ENCODE measurements at regions of chr2 and their contacts with region 1.

Region 1: GRCh38 chr2:25991965-25992364 is 9.7 kb upstream of the KIF3C start:
- DNase-seq: no peak
- ATAC-seq: peak; percentile 50
- H3K4me3 ChIP-seq: no peak overlapping the region
- H3K27ac ChIP-seq: no peak overlapping the region
- H3K4me1 ChIP-seq: no peaks in the 10 kb centered on the region
- H3K27me3 ChIP-seq: no peaks in the 10 kb centered on the region
- CTCF ChIP-seq: no peak
- EP300 ChIP-seq: no peak
- POLR2A ChIP-seq: no peak
- RAD21 ChIP-seq: no peak

Region 2: GRCh38 chr2:24797644-24798043 is 1194.3 kb before region 1 on chr2:
- CTCF ChIA-PET with region 1: no interaction called
- POLR2A ChIA-PET with region 1: no interaction called
- RAD21 ChIA-PET with region 1: no interaction called
- SMC1A ChIA-PET with region 1: no interaction called
- in situ Hi-C with region 1: no loop called
- intact Hi-C with region 1: no loop called
- DNase-seq: no peak
- ATAC-seq: no peak
- H3K4me3 ChIP-seq: no peak overlapping the region
- H3K27ac ChIP-seq: no peak overlapping the region
- H3K4me1 ChIP-seq: no peaks in the 10 kb centered on the region
- H3K27me3 ChIP-seq: no peaks in the 10 kb centered on the region
- CTCF ChIP-seq: no peak
- EP300 ChIP-seq: no peak
- POLR2A ChIP-seq: no peak
- RAD21 ChIP-seq: no peak

Region 3: DNA sequence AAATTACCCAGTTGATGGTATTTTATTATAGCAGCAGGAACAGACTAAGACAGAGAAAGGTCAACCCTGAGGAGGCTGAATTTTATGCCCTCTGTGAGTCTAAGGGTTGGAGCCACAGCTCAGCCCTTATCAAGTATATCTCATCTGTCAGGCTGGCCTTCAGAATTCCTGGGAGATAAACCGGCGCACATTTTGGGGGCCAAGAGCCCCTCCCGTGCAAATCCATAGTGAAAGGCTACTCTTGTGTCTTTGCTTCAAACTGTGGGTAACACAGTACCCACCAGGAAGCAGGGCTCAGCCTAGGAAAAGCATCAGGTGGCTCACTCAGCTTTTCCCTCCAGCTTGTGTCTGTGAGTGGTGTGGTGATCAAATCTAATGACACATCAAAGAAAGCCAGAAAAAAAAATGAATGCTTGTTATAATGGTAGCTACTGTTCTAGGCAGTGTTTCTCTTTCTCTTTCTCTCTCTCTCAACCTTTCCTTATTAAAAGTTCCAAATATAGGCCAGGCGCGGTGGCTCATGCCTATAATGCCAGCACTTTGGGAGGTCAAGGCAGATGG is 88.7 kb before region 1 on chr2:
- CTCF ChIA-PET with region 1: no interaction called
- POLR2A ChIA-PET with region 1: no interaction called
- RAD21 ChIA-PET with region 1: no interaction called
- SMC1A ChIA-PET with region 1: no interaction called
- in situ Hi-C with region 1: no loop called
- intact Hi-C with region 1: no loop called
- DNase-seq: no peak
- ATAC-seq: no peak
- H3K4me3 ChIP-seq: no peak overlapping the region
- H3K27ac ChIP-seq: no peak overlapping the region
- H3K4me1 ChIP-seq: no peaks in the 10 kb centered on the region
- H3K27me3 ChIP-seq: no peaks in the 10 kb centered on the region; a peak in 2 of 4 replicates
- CTCF ChIP-seq: no peak
- EP300 ChIP-seq: no peak
- POLR2A ChIP-seq: no peak
- RAD21 ChIP-seq: no peak

Region 4: DNA sequence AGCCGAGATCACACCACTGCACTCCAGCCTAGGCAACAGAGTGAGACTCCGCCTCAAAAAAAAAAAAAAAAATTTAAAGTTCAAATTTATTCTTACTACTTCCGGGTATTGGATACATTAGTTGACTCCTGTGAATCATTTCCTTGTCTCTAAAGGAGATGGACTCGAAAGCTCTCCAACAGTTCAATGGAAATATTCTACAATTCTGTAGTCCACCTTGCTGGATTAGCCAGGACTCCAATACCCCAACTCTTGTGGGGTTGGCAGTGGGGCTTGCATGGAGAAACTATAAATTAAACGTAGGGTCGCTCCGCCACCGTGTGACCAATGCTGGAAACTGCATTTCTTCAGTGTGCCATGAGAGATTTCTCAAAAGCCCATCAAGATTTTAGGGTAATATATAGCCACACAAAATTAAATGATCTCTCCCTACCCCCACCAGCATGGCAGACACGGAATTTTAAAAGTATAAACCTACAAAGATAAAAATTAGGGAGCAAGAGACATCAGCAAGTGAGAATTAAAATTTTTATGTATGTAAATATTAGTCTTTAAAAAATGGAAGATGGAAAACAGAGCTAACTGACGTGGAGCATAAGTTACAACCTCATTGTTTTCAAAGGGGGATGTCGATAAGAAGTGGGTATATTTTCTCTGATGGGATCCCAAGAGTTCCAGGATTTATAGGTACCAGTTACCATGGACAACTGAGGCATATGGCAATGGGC is 153.2 kb after region 1 on chr2:
- CTCF ChIA-PET with region 1: interaction called, 84 read pairs
- POLR2A ChIA-PET with region 1: no interaction called
- RAD21 ChIA-PET with region 1: interaction called, 17 read pairs
- SMC1A ChIA-PET with region 1: interaction called, 57 read pairs
- in situ Hi-C with region 1: loop called (anchors 5 kb)
- intact Hi-C with region 1: loop called (anchors 1 kb)
- DNase-seq: peak; percentile 23
- ATAC-seq: peak; percentile 87
- H3K4me3 ChIP-seq: no peak overlapping the region
- H3K27ac ChIP-seq: no peak overlapping the region
- H3K4me1 ChIP-seq: no peaks in the 10 kb centered on the region
- H3K27me3 ChIP-seq: no peaks in the 10 kb centered on the region
- CTCF ChIP-seq: peak; percentile 66 to 86 (median 79)
- EP300 ChIP-seq: no peak
- POLR2A ChIP-seq: no peak
- RAD21 ChIP-seq: peak; percentile 95

Region 5: DNA sequence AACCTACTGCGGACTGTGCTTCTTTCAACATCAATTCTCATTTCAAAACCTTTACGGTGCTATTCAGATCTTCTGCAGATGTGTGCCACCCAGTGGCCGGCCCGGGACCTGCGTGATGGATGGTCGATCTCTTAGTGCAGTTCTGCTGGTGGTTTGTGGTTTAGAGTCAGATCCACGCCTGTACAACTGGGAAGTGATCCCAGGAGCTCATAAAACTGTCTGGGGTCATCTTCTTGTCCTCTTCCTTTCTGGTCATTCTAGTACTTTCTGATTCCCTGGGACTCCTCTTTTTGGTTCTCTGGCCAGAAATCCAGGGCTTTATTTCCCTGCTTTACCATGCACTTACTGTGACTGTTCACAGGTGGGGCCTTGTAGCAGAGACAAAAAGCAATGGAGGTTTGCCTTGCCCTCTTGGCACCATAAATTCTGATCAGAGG is 338.2 kb after region 1 on chr2:
- CTCF ChIA-PET with region 1: interaction called, 13 read pairs
- POLR2A ChIA-PET with region 1: no interaction called
- RAD21 ChIA-PET with region 1: interaction called, 5 read pairs
- SMC1A ChIA-PET with region 1: interaction called, 4 read pairs
- in situ Hi-C with region 1: no loop called
- intact Hi-C with region 1: loop called (anchors 5 kb)
- DNase-seq: peak; percentile 31
- ATAC-seq: peak; percentile 99
- H3K4me3 ChIP-seq: no peak overlapping the region
- H3K27ac ChIP-seq: no peak overlapping the region
- H3K4me1 ChIP-seq: no peaks in the 10 kb centered on the region
- H3K27me3 ChIP-seq: no peaks in the 10 kb centered on the region
- CTCF ChIP-seq: peak; percentile 91 to 96 (median 92)
- EP300 ChIP-seq: no peak
- POLR2A ChIP-seq: no peak
- RAD21 ChIP-seq: peak; percentile 92